Dendritic cell treated with granulocyte-macrophage colony-stimulating factor and Interleukin-4, amounts not matched to agents 40 ng/mL and 50 ng/mL, for 4 days (primary cell): ENCODE measurements at regions of chr4 and their contacts with region 1.

Region 1: DNA sequence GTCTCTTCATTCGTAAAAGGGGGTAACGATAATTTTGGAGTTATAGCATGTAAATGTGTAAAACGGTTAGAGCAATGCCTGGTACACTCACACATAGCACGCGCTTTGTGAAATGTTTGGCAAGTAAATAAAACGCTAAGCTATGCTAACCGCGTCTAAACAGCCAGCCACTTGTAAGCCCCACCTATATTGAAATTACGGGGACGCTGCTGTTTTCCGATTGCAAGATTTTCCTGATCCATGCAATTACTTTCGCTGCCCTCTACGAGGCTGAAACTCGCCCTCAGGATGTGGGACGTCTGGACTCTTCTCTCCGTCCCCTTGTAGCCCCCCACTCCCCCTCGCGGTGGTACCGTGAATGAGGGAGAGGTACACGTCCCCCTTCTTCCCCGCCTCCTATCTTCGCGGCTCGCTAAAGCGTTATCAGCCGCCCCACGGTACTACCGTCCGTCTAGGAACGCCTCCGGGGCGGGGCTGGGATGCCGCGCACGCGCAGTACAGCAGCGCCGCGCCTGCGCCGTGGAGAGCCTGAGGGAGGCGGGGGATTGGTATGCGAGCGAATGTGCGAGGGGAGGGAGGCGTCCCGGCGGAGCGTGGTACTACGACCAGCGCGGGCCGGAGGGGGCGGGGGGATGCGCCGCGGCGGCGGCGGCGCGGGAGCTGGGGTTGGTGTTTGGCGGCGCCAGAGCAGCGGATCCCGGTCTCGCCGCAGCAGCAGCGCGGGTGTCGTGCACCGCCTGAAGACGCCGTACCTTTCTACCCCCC is at the start of gene STIM2:
- H3K4me3 Mint-ChIP-seq: peak within 1 kb of the TSS; percentile 86
- H3K27ac Mint-ChIP-seq: peak within 1 kb of the TSS; percentile 94
- H3K4me1 Mint-ChIP-seq: peaks cover 55% of the 10 kb centered on the region
- H3K27me3 Mint-ChIP-seq: no peaks in the 10 kb centered on the region

Region 2: DNA sequence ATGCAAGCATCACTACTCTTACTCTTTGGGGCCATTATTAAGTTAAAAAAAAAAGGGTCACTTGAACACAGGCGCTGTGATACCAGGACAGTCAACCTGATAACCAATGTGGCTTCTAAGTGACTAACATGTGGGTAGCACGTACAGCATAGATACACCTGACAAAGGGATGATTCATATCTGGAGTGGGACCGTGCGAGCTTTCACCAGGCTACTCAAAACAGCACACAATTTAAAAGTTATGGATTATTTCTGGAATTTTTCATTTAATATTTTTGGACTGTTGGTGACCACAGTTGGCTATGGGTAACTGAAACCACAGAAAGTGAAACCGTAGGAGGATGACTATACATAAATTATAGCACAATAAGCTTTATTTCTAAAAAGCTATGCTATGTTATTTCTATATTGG is 113.5 kb before region 1 on chr4:
- intact Hi-C with region 1: loop called (anchors 10 kb)
- H3K4me3 Mint-ChIP-seq: no peak overlapping the region
- H3K27ac Mint-ChIP-seq: no peak overlapping the region
- H3K4me1 Mint-ChIP-seq: peaks cover 17% of the 10 kb centered on the region
- H3K27me3 Mint-ChIP-seq: no peaks in the 10 kb centered on the region

Region 3: GRCh38 chr4:26839534-26839951 is 20.8 kb before region 1 on chr4:
- intact Hi-C with region 1: no loop called
- H3K4me3 Mint-ChIP-seq: no peak overlapping the region
- H3K27ac Mint-ChIP-seq: no peak overlapping the region
- H3K4me1 Mint-ChIP-seq: peaks cover 12% of the 10 kb centered on the region
- H3K27me3 Mint-ChIP-seq: peaks cover 2% of the 10 kb centered on the region

Region 4: GRCh38 chr4:26885912-26886274 is 25.6 kb after region 1 on chr4:
- intact Hi-C with region 1: loop called (anchors 2 kb)
- H3K4me3 Mint-ChIP-seq: peak overlapping the region; percentile 64
- H3K27ac Mint-ChIP-seq: peak overlapping the region; percentile 94
- H3K4me1 Mint-ChIP-seq: peaks cover 49% of the 10 kb centered on the region
- H3K27me3 Mint-ChIP-seq: no peaks in the 10 kb centered on the region

Region 5: DNA sequence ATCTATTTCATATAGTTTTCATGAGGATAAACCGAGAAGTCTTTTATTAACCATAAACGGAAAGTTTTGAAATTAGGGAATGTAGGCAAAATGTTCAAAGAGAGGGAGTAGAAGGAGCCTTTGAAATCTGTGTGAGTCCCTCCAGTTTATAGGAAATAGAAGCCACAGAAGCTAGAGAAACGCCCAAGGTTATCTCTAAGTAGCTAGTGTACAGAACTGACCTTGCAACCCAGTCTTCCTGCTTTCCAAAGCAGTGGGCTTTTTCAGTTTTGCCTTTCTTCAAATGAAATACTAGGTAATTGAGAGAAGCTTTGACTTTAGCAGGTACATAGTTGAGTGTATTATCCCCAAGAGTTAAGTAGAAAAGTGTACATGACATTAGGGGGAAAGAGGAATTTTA is 39.7 kb after region 1 on chr4:
- intact Hi-C with region 1: loop called (anchors 5 kb)
- H3K4me3 Mint-ChIP-seq: no peak overlapping the region
- H3K27ac Mint-ChIP-seq: no peak overlapping the region
- H3K4me1 Mint-ChIP-seq: peaks cover 44% of the 10 kb centered on the region
- H3K27me3 Mint-ChIP-seq: no peaks in the 10 kb centered on the region

Region 6: DNA sequence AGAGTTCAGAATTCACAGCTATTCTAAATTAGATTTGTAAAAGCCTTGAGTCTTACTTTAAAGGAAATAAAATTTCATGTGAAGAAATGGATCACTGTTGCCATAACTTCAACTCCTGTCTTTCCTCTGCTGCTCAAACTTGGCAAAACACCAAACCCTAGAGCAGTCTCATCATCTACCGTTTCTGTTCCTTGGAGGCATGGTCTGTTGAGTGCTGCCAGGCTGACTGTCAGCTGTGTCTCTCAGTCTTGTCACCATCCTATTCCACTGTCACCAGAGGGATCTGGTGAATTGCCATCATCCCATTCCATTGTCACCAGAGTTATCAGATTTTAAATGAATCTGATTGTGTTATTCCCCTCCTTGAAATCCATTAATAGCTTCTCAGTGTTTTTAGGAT is 55.9 kb after region 1 on chr4:
- intact Hi-C with region 1: loop called (anchors 5 kb)
- H3K4me3 Mint-ChIP-seq: no peak overlapping the region
- H3K27ac Mint-ChIP-seq: peak overlapping the region; percentile 29
- H3K4me1 Mint-ChIP-seq: peaks cover 44% of the 10 kb centered on the region
- H3K27me3 Mint-ChIP-seq: no peaks in the 10 kb centered on the region

Region 7: DNA sequence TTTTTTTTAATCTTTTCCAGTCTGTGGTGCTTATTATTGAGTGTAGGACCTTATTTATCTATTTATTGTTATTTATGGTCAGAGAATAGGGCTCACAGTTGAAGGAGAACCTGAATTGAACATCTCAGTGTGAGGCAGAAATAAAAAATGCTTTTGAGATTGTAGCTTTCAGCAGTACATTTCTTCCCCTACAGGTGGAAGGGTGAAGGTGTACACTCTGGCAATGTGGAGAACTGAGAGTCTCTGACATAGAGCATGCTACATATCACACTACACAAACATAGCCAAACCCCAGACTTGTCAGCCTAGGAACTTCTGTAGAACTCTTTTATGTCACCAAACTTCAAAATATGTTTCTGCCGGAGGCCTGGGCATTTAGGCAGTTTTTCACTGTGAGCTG is 140.5 kb after region 1 on chr4:
- intact Hi-C with region 1: loop called (anchors 5 kb)
- H3K4me3 Mint-ChIP-seq: no peak overlapping the region
- H3K27ac Mint-ChIP-seq: no peak overlapping the region
- H3K4me1 Mint-ChIP-seq: no peaks in the 10 kb centered on the region
- H3K27me3 Mint-ChIP-seq: no peaks in the 10 kb centered on the region

Region 8: DNA sequence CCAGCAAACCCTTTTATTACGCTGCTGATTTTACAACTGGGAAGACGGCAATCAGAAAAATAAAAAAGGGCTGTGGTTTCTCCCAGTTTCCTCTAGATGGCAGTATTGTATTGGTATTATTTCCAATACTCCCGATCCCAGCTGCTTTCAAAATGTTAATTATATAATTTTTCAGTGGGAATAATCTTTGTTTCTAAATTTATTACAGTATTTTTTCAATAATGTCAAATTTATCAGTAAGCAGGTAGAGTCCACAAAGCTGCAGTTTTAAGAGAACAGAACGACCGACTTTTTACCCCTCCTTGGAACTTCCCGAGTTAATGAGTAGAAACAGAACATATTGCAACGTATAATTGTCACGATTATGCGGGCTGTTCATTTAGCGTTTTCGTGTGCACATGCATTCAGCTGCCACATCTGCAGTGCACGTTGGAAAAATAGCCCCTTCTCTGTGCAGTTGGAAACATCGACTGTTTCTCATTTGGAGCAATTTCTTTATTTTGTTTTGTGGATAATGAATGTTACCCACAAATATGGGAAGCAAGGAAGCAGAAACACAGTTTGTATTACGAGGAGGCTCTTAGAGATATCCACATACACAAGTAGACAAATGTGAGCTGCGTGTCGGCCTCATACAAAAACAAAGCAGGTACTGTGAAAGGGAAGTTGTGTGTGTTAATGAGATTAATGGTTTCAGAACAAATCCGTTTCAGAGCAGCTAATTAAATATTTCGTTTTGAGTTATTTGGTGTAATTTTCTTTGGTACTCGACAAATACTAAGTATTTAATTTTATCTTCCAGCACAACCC is 188.3 kb after region 1 on chr4:
- intact Hi-C with region 1: no loop called
- H3K4me3 Mint-ChIP-seq: peak overlapping the region; percentile 42
- H3K27ac Mint-ChIP-seq: no peak overlapping the region
- H3K4me1 Mint-ChIP-seq: peaks cover 4% of the 10 kb centered on the region
- H3K27me3 Mint-ChIP-seq: peaks cover 76% of the 10 kb centered on the region